GM18951 (cell line): ENCODE measurements at regions of chr6 and their contacts with region 1.

Region 1: DNA sequence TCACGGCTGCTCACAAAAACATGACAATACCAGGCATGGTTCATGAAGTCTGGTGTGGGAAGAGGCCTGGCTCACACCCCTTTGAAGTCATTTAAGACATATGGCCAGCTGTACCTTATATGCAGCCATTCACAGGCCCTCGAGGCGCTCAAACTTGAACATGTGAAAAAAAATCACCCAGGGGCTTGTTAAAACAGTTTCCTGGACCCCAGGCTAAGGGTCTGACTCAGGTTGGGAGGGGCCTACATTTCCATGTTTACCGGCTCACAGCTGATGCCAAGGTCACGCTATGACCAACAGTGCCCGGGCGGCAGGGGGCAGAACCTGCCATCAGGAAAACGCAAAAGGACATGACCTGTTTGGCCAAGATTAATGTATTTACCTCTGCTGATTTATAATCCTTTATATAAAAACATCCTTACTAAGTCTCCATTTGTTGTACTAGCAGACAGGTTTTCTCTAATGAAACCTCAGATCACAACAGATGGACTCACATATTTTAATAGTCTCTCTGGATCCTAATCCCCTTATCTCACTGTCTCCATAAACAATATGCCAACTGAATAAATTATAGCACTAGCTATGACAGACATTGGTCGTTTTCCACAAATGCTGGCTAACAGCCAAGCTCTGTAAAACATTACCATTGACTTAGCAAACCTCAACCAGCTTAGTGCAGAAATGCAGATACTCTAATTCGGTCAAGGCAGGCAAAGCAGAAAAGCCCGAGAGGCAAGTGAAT is 19.9 kb downstream of the EZR start:
- POLR2A ChIP-seq: no peak

Region 2: DNA sequence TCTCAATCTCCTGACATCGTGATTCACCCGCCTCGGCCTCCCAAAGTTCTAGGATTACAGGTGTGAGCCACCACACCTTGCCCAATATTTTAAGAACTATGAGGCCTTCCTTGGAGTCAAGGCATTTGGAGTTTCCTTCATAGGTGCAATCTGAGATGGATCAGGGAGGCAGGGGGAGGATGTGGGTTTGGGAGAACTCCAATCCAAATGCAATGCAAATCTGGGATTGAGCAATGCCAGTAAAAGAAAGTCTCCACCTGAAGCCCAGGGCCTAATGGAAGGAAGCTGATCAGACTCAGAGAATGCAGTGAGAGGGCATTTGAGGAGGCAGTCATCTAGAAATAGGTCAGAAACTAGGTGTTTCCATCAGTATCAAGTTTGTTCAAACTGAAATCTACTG is 179.5 kb after region 1 on chr6:
- in situ Hi-C with region 1: loop called (anchors 5 kb)
- POLR2A ChIP-seq: no peak

Region 3: DNA sequence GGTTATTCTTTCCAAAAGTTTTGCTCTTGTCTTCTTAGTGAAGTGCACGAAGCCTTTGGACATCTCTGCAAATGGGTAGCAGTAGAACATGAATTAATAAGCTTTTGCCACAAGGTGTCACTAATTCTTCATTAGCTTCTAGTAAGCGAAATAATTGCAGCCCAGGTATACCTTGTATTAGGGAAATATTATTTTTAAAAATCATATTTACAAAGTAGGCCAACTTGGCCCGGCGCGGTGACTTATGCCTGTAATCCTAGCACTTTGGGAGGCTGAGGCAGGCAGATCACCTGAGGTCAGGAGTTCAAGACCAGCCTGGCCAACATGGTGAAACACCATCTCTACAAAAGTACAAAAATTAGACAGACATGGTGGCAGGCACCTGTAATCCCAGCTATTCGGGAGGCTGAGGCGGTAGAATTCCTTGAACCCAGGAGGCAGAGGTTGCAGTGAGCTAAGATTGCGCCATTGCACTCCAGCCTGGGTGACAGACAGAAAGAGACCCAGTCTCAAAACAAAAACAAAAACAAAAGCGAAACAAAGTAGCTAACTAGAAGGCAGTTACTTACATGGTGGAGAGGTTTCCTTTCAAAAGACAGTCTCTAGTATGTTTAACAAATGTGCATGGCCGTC is 209.6 kb after region 1 on chr6:
- in situ Hi-C with region 1: no loop called
- POLR2A ChIP-seq: no peak